Mammary epithelial cell (primary cell): ENCODE measurements at regions of chr16 and their contacts with region 1.

Region 1: GRCh38 chr16:80158766-80159165 is 382.0 kb upstream of the DYNLRB2 start:
- DNase-seq: peak; percentile 95
- H3K4me3 ChIP-seq: no peak overlapping the region
- H3K27ac ChIP-seq: no peak overlapping the region
- H3K4me1 ChIP-seq: peaks cover 14% of the 10 kb centered on the region
- H3K27me3 ChIP-seq: no peaks in the 10 kb centered on the region
- CTCF ChIP-seq: no peak

Region 2: GRCh38 chr16:80197741-80198201 is 39.0 kb after region 1 on chr16:
- CTCF ChIA-PET with region 1: no interaction called
- dilution Hi-C with region 1: no loop called
- in situ Hi-C with region 1: no loop called
- intact Hi-C with region 1: loop called (anchors 1 kb)
- DNase-seq: peak; percentile 93
- H3K4me3 ChIP-seq: peak overlapping the region in 1 of 3 experiments; percentile 12
- H3K27ac ChIP-seq: peak overlapping the region; percentile 99
- H3K4me1 ChIP-seq: peaks cover 16% of the 10 kb centered on the region
- H3K27me3 ChIP-seq: no peaks in the 10 kb centered on the region
- CTCF ChIP-seq: no peak